Right ventricle myocardium superior (tissue), 1 donor: ENCODE measurements at regions of chr12 and their contacts with region 1.

Region 1: DNA sequence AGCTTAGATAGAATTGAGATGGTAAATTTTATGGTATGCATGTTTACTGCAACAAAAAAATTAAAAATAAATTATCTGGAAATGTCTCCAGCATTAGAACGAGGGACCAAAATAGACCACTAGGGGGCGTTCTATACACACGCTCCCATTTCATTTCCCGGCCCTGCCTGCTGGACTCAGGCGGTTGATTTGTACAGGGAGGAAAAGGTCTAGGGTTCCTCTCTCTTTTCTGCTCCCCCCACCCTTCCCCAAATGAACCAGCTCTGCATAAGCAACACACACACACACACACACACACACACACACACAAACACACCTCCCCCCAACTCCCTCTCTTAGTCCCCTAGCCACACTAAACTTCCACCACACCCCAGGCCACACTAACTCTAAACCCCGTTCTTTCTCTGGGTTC is 7.8 kb upstream of the DTX1 start:
- DNase-seq: no peak
- ATAC-seq: peak; percentile 88

Region 2: GRCh38 chr12:111777345-111778045 is 1271.2 kb before region 1 on chr12:
- intact Hi-C with region 1: no loop called
- DNase-seq: peak; percentile 56
- ATAC-seq: no peak

Region 3: DNA sequence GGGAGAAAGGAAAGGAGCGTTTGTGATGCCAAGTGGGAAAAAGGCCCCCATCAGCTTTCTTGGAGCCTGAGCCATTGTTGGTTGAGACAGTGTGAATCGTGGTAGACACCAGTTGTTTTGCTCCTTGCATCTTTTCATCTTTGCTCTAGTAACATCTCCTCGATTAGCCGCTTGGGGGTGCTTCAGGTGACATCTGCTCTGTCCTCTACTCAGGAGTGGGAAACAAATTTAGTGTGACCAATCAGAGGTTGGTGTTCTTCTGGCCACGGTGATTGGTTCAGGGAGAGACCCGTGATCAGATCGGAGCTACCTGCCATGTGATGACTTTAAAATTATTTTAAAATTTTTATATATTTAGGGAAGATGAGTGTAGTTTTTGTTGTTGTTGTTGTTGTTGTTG is 323.3 kb before region 1 on chr12:
- intact Hi-C with region 1: no loop called
- DNase-seq: no peak
- ATAC-seq: no peak

Region 4: GRCh38 chr12:113098446-113098896 is 49.7 kb after region 1 on chr12:
- intact Hi-C with region 1: loop called (anchors 5 kb)
- DNase-seq: peak; percentile 87
- ATAC-seq: peak; percentile 86

Region 5: GRCh38 chr12:113152835-113153814 is 104.4 kb after region 1 on chr12:
- intact Hi-C with region 1: loop called (anchors 5 kb)
- DNase-seq: peak; percentile 83
- ATAC-seq: peak; percentile 93

Region 6: DNA sequence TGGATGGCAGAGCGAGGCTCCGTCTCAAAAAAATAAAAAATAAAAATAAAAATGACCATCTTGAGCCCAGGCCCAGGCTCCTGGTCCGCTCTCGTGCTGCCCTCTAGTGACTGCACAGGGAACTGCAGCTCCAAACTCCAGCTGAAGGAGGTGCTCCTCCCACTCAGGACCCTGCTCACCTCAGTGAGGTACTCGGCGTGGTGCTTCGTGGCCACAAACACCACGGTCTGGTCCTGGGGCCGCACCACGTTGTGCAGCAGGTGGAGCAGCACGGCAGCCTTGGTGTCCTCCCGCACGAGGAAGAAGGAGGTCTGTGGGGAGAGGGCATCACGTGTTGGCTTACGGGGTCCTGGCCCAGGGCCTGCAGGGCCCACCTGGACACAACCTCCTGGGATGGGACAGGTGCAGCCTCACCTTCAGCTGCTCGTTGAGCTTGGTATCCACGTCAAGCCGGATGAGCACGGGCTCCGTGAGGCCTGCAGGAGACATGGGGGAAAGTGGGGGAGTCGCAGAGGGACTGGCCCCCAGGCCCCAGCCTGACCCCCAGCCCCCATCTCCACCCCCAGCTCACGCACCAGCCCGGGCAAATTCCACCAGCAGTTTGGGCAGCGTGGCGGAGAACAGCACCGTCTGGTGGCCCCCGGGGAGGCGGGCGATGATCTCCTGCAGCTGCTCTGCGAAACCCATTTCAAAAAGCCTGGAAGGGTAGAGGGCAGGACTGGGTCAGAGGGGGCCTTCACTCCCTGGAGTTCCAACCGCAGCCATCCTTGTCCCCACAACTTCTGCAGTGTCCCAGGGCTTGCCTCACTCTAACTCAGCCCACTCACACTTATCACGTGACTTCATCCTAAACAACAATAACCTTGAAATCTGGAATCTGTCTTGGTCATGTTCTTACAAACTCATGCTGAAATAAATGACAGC is 126.0 kb after region 1 on chr12:
- intact Hi-C with region 1: loop called (anchors 2 kb)
- DNase-seq: peak; percentile 82
- ATAC-seq: peak; percentile 84

Region 7: DNA sequence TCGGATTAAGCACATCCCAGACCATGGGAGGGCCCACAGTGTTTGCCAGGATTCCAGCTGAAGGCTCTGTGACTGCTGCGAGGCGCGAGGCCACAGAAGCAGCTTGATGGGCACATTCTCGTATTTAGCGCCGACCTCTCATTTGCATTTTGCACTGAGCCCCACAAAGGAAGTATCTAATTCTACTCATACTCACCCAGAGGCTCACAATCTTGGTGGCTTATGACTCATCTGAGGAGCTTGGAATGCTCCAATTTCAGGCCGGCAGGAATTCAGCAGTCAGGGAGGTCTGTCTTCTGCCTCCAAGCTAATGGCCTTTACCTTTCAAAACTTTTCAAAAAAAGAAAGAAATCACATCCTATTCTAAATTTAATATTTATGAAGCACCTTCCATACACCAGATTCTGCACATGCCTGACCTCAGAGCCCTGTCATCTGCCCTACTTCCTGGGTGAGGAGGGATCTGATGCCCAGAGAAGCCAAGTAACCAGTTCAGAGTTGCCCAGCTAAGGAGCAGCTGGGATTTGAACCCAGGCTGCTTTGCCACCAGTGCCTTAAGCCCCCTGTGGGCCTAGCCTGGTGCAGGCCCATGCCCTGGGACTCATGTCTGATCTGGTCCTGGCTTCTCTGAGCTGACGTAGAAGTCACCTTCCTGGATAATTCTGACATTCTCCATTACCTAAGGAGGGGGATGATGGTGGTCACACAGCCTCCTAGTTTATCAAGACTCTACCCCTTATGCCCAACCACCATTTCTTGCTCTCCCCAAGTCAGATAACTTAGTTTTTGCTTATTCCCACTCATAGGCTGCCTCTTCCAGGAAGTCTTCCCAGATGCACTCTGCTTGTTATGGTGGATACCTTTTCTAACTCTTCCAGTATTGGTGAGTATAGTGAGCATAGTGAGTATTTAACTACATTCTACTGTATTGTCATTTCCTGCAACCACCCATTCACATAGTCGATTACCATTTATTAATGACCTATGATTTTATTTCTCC is 718.5 kb after region 1 on chr12:
- intact Hi-C with region 1: no loop called
- DNase-seq: no peak
- ATAC-seq: no peak